Left colon (tissue), 2 donors: ENCODE measurements at regions of chr17 and their contacts with region 1.

Region 1: GRCh38 chr17:35969558-35970380 is 11.5 kb downstream of the CCL16 start:
- DNase-seq: peak; percentile 57 to 85
- ATAC-seq: peak; percentile 80

Region 2: GRCh38 chr17:36148559-36149295 is 179.0 kb after region 1 on chr17:
- intact Hi-C with region 1: loop called in 1 of 2 experiments (anchors 10 kb)
- DNase-seq: peak in 1 of 2 donors; percentile 68
- ATAC-seq: peak; percentile 80

Region 3: GRCh38 chr17:36153895-36154610 is 184.3 kb after region 1 on chr17:
- intact Hi-C with region 1: loop called (anchors 2 to 10 kb)
- DNase-seq: no peak
- ATAC-seq: no peak

Region 4: DNA sequence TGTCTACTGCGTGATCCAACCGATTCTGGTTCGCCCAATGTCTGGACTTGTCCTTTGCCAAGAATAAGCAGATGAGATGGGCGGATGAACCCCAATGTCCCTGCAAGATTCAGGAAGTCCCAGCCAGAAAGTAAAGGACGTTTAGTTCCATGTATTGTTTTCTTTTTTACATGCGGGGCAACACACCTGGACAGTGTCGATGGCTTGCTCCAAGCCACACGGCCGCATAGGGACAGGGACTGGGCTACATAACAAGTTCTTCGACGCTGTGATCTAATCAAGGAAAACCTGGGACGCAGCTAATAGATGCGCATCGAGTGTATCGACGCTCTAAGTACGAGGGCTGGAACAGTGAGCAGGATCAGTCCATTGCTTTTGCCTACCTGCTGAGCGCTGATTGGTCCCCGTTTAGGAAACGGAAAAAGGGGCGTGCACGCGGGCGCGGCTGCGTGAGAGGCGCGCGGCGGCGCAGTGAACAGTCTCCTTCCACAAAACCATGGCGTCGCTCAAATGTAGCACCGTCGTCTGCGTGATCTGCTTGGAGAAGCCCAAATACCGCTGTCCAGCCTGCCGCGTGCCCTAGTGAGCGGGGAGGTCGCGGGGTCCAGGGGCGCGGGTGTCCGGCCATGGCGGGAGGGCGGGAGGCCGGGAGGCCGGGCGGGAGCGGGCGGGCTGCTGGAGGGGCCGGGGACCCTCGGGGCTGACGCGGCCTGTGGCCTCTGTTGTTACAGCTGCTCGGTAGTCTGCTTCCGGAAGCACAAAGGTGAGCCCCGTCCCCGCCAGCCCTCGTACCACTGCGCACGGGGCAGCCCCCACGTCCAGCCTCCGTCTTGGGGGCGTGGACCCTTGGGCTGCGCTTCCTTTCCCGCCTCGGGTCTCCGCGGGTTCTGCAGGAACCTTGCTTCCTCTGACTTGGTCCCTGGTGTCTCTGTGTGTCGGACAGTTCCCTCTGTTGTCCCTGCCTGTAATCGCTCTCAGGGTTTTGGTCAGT is 516.7 kb after region 1 on chr17 and contains the start of gene ZNHIT3:
- intact Hi-C with region 1: loop called in 1 of 2 experiments (anchors 10 kb)
- DNase-seq: peak; percentile 92 to 95
- ATAC-seq: peak; percentile 95
- total RNA-seq, gene ZNHIT3: 23.8 to 25.7 TPM